Activated naive CD4-positive, alpha-beta T cell treated with anti-CD3 and anti-CD28 coated beads for 36 hours (primary cell): ENCODE measurements at regions of chr19 and their contacts with region 1.

Region 1: GRCh38 chr19:40750059-40750873 is at the start of gene ACTMAP:
- DNase-seq: peak; percentile 100
- H3K4me3 Mint-ChIP-seq: peak within 1 kb of the TSS; percentile 99
- H3K27ac Mint-ChIP-seq: peak within 1 kb of the TSS; percentile 99
- H3K4me1 Mint-ChIP-seq: peaks cover 33% of the 10 kb centered on the region
- H3K27me3 Mint-ChIP-seq: no peaks in the 10 kb centered on the region
- total RNA-seq, gene ACTMAP: 23.0 to 25.0 TPM

Region 2: GRCh38 chr19:40614622-40615411 is 135.4 kb before region 1 on chr19:
- CTCF ChIA-PET with region 1: interaction called, 3 read pairs
- intact Hi-C with region 1: loop called (anchors 1 kb)
- DNase-seq: peak; percentile 98
- H3K4me3 Mint-ChIP-seq: peak overlapping the region; percentile 88
- H3K27ac Mint-ChIP-seq: peak overlapping the region; percentile 97
- H3K4me1 Mint-ChIP-seq: peaks cover 67% of the 10 kb centered on the region
- H3K27me3 Mint-ChIP-seq: no peaks in the 10 kb centered on the region

Region 3: DNA sequence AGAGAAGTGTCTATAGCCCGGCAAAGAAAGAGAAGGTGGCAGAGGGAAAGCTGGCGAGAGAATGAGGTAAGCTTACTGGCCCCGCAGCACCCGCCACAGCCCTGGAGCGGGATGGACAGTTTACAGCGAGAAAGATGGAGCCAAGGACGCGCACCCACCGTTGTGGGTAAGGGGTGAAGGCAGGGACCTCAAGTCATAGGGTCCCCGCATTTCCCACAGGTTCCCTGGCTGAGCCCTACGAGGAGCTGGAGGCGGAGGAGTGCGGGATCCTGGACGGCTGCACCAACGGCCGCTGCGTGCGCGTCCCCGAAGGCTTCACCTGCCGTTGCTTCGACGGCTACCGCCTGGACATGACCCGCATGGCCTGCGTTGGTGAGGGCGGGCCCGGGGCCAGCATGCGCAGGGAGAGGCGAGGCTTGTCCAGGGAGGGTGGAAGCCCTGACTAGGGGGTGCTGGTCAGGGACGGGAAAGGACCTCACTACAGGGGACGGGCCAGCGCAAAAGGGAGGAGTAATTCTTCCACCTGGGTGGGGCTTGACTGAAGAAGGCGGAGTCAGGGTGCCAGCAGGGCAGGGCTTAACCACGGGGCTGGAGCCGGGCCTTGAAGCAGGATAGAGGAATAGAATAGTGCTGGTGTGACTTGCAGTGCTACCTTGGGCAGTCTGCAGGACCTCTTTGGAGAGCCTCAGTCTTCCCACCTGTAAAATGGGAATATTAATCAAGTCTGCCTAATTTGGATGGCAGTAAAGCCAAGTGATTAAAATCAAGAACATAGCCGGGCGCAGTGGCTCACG is 122.6 kb before region 1 on chr19:
- CTCF ChIA-PET with region 1: no interaction called
- intact Hi-C with region 1: no loop called
- DNase-seq: no peak
- H3K4me3 Mint-ChIP-seq: no peak overlapping the region
- H3K27ac Mint-ChIP-seq: no peak overlapping the region
- H3K4me1 Mint-ChIP-seq: peaks cover 5% of the 10 kb centered on the region
- H3K27me3 Mint-ChIP-seq: no peaks in the 10 kb centered on the region

Region 4: GRCh38 chr19:40690693-40691420 is 59.4 kb before region 1 on chr19:
- CTCF ChIA-PET with region 1: no interaction called
- intact Hi-C with region 1: loop called (anchors 1 kb)
- DNase-seq: peak; percentile 93
- H3K4me3 Mint-ChIP-seq: peak overlapping the region; percentile 87
- H3K27ac Mint-ChIP-seq: peak overlapping the region; percentile 95
- H3K4me1 Mint-ChIP-seq: peaks cover 7% of the 10 kb centered on the region
- H3K27me3 Mint-ChIP-seq: no peaks in the 10 kb centered on the region

Region 5: GRCh38 chr19:40777937-40778705 is 27.9 kb after region 1 on chr19 and contains the start of gene RAB4B:
- CTCF ChIA-PET with region 1: interaction called, 4 read pairs
- intact Hi-C with region 1: loop called (anchors 1 kb)
- DNase-seq: peak; percentile 100
- H3K4me3 Mint-ChIP-seq: peak within 1 kb of the TSS; percentile 85
- H3K27ac Mint-ChIP-seq: peak within 1 kb of the TSS; percentile 91
- H3K4me1 Mint-ChIP-seq: peaks cover 39% of the 10 kb centered on the region
- H3K27me3 Mint-ChIP-seq: no peaks in the 10 kb centered on the region
- total RNA-seq, gene RAB4B: 40.0 to 40.3 TPM

Region 6: DNA sequence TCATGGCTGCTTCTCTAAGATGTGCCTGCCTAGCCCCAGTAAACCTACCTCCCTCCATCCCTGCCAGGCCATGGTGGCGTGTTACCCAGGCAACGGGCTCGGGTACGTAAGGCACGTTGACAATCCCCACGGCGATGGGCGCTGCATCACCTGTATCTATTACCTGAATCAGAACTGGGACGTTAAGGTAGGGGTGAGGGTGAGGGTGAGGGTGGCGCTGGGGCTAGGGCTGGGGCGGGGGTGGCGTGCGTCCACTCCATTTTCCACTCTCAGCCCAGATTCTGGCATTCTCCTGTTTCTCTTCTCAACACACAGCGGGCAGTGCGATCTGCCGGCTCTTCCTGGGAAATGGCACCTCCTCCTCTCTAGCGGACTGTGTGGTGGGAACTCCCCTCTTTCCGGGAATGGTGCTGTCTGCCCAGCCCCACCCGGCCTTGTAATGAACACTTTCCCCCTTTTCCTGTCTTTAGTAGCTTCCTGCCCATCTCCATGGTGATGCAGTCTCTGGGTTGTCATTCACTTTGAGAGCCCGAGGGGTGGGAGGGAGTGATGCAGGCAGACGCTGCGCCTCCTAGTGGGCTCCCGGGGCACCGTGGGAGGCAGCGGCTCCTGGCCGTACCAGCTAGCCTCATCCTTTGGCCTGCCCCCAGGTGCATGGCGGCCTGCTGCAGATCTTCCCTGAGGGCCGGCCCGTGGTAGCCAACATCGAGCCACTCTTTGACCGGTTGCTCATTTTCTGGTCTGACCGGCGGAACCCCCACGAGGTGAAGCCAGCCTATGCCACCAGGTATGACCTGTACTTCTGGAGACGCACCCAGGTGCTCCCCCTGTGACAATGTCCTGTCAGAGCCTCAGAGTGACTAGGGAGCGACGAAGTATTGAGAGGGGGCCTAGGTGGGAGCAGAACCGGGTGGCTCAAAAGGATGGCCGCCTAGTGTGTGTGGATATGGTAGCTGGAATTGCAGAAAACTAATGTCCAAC is 56.5 kb after region 1 on chr19:
- CTCF ChIA-PET with region 1: interaction called, 34 read pairs
- intact Hi-C with region 1: loop called (anchors 1 kb)
- DNase-seq: peak; percentile 90
- H3K4me3 Mint-ChIP-seq: peak overlapping the region; percentile 67
- H3K27ac Mint-ChIP-seq: peak overlapping the region; percentile 93
- H3K4me1 Mint-ChIP-seq: peaks cover 81% of the 10 kb centered on the region
- H3K27me3 Mint-ChIP-seq: no peaks in the 10 kb centered on the region

Region 7: DNA sequence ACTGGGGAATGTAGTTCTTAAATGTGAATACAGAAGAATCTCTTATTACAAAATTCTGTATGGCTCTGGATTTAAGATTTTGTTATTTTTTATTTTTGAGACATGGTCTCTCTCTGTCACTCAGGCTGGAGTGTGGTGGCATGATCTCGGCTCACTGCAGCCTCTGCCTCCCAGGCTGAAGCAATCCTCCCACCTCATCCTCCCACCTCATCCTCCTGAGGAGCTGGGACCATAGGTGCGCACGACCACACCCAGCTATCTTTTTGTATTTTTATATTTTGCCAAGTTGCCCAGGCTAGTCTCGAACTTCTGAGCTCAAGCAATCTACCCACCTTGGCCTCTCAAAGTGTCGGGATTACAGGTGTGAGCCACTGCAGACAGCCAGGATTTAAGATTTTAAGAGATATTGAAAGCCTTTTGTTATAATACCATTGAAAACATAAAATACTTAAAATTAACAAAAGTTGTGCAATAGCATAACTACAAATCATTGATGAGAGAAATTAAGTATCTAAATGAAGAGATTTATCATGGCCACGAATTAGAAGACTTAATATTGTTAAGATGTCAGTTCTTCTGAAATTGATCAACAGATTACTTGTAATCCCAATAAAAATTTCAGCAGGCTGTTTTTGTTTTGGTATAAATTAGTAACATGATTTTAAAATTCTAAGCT is 86.6 kb after region 1 on chr19:
- CTCF ChIA-PET with region 1: no interaction called
- intact Hi-C with region 1: no loop called
- DNase-seq: no peak
- H3K4me3 Mint-ChIP-seq: no peak overlapping the region
- H3K27ac Mint-ChIP-seq: no peak overlapping the region
- H3K4me1 Mint-ChIP-seq: peaks cover 13% of the 10 kb centered on the region
- H3K27me3 Mint-ChIP-seq: no peaks in the 10 kb centered on the region

Region 8: GRCh38 chr19:40908976-40909375 is 158.7 kb after region 1 on chr19:
- CTCF ChIA-PET with region 1: no interaction called
- intact Hi-C with region 1: loop called (anchors 2 kb)
- DNase-seq: peak; percentile 71
- H3K4me3 Mint-ChIP-seq: peak overlapping the region; percentile 71
- H3K27ac Mint-ChIP-seq: no peak overlapping the region
- H3K4me1 Mint-ChIP-seq: peaks cover 11% of the 10 kb centered on the region
- H3K27me3 Mint-ChIP-seq: peaks cover 8% of the 10 kb centered on the region

Region 9: GRCh38 chr19:40921005-40921897 is 171.0 kb after region 1 on chr19:
- CTCF ChIA-PET with region 1: no interaction called
- intact Hi-C with region 1: no loop called
- DNase-seq: no peak
- H3K4me3 Mint-ChIP-seq: no peak overlapping the region
- H3K27ac Mint-ChIP-seq: no peak overlapping the region
- H3K4me1 Mint-ChIP-seq: no peaks in the 10 kb centered on the region
- H3K27me3 Mint-ChIP-seq: no peaks in the 10 kb centered on the region